Transverse colon (tissue), 4 donors: ENCODE measurements at regions of chr10 and their contacts with region 1.

Region 1: DNA sequence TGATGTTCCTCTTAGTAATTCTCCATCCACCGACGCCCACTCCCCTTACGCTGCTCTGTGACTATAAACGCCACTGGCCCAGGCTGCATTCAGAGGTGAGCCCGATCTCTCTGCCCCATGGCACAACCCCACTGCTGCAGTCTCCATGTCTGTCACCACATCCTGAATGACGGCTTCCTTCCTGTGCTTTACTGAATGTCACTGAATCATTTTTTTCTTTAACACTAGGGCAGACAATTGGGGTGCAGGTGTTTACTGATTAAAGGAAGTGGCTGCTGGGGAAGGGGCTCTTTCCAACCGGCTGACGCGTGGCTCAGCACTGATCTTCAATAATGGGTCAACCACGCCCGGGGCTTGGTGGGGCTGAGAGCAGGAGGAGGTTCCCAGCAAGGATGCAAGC is 208.3 kb downstream of the USP6NL start:
- DNase-seq: peak; percentile 16
- H3K4me3 ChIP-seq: no peak overlapping the region
- H3K27ac ChIP-seq: peak overlapping the region in 1 of 4 donors; percentile 3
- H3K4me1 ChIP-seq: no peaks in the 10 kb centered on the region
- H3K27me3 ChIP-seq: no peaks in the 10 kb centered on the region
- CTCF ChIP-seq: no peak
- EP300 ChIP-seq: no peak
- POLR2A ChIP-seq: no peak

Region 2: DNA sequence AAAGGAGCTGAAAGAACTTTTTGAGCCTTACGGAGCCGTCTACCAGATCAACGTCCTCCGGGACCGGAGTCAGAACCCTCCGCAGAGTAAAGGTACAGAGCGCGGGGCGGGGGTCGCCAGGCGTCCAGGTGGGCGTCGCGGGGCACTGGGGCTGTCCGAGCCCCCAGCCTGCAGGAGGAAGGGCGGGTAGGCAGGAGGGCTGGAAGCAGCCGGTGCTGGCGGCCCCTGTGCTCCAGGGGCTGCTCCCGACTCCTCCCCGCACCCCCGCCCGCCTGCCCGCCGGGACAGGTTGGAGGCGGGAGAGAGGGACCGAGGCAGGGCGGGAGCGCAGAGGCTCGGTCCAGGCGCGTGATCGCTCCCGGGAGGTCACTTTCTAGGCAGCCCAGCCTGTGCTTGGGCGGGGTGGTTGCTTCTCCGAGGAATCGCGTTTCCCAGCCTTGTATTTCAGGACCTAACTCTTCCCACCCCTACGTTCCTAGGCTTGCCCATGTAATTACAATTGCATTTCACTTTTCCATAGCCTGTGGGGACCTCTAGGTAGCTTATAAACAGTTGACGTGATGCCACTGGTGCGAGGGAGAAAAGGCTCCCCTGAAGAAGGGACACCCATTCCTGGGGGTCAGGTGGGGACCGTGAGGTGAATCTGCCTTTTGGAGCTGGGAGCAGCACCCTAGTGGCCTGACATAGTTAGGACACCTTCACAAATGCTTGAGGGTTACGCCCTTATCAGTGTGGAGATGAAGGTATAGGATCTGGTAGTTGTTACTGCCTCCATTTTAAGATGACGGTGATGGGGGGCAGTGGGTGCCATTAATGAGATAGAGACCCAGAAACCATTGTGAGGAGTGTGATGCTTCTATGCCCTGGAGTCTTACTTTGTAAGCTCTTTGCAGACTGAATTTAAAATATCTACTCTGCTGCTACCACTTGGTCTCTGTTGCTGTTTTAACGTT is 237.2 kb before region 1 on chr10:
- in situ Hi-C with region 1: no loop called
- intact Hi-C with region 1: no loop called
- DNase-seq: peak; percentile 63
- H3K4me3 ChIP-seq: peak overlapping the region; percentile 43 to 76 (median 48)
- H3K27ac ChIP-seq: peak overlapping the region; percentile 82 to 92 (median 87)
- H3K4me1 ChIP-seq: peaks cover 0 to 34% (median 10%) of the 10 kb centered on the region in 4 donors
- H3K27me3 ChIP-seq: no peaks in the 10 kb centered on the region
- CTCF ChIP-seq: peak; percentile 39 to 61 (median 46)
- EP300 ChIP-seq: no peak
- POLR2A ChIP-seq: peak; percentile 29

Region 3: GRCh38 chr10:11209830-11210181 is 193.3 kb before region 1 on chr10:
- in situ Hi-C with region 1: no loop called
- intact Hi-C with region 1: loop called (anchors 10 kb)
- DNase-seq: no peak
- H3K4me3 ChIP-seq: peak overlapping the region in 1 of 4 donors; percentile 3
- H3K27ac ChIP-seq: peak overlapping the region in 2 of 4 donors; percentile 2 to 30
- H3K4me1 ChIP-seq: peaks cover 2 to 47% (median 20%) of the 10 kb centered on the region in 4 donors
- H3K27me3 ChIP-seq: no peaks in the 10 kb centered on the region
- CTCF ChIP-seq: no peak
- EP300 ChIP-seq: no peak
- POLR2A ChIP-seq: no peak